Naive thymus-derived CD8-positive, alpha-beta T cell (primary cell): ENCODE measurements at regions of chr17 and their contacts with region 1.

Region 1: GRCh38 chr17:68291844-68292695 is 775 bp downstream of the ARSG start:
- DNase-seq: peak; percentile 85 to 98 (median 96)
- ATAC-seq: peak; percentile 69 to 71
- H3K4me3 Mint-ChIP-seq: peak overlapping the region; percentile 77 to 94 (median 84)
- H3K27ac Mint-ChIP-seq: peak overlapping the region; percentile 81 to 95 (median 91)
- H3K4me1 Mint-ChIP-seq: peaks cover 38 to 72% (median 70%) of the 10 kb centered on the region in 4 donors
- H3K27me3 Mint-ChIP-seq: no peaks in the 10 kb centered on the region

Region 2: DNA sequence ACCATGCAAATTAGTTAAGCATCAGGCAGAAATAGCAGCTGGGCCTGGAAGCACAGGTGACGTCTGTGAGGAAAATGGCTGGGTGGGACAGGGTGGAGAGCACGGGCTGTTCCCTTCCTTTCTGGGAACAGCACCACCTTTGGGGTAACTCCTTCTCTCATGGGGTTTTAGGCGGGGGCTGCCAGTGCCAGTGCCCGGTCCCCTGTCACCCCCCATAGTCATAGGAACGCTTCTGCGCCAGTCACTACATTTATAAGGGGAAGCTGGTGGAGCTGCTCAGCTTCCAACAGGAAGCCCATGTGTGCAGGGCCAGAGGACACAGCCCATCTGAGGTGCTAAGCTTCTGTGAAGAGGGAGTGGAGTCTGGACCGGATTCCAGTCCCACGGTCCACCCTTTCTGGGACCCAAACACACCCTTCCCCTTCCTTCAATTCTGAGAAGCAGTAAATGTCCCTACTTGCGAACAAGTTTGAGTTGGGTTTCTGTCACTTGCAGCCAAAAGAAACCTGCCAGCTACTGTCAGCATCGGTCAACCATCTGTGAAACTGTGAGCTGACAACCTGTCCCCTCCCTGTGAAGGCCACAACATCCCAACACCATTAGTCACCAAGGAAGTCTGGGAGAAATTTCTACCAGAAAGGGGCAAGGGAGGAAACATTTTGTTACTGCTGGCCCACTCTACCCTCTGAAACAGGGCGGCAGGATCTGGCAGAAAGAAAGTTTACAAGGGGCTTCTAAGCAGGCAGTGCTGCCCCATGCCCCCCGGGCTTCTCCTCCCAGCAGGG is 130.2 kb before region 1 on chr17:
- POLR2A ChIA-PET with region 1: no interaction called
- DNase-seq: no peak
- ATAC-seq: no peak
- H3K4me3 Mint-ChIP-seq: no peak overlapping the region
- H3K27ac Mint-ChIP-seq: peak overlapping the region in 1 of 10 donors; percentile 34
- H3K4me1 Mint-ChIP-seq: peaks cover 2 to 7% (median 4%) of the 10 kb centered on the region in 4 donors
- H3K27me3 Mint-ChIP-seq: no peaks in the 10 kb centered on the region

Region 3: GRCh38 chr17:68184816-68185436 is 107.1 kb before region 1 on chr17:
- POLR2A ChIA-PET with region 1: interaction called, 21 read pairs
- DNase-seq: peak in 5 of 10 donors; percentile 41 to 63 (median 58)
- ATAC-seq: peak; percentile 76 to 79
- H3K4me3 Mint-ChIP-seq: peak overlapping the region; percentile 45 to 94 (median 64)
- H3K27ac Mint-ChIP-seq: peak overlapping the region; percentile 57 to 94 (median 86)
- H3K4me1 Mint-ChIP-seq: peaks cover 19 to 71% (median 52%) of the 10 kb centered on the region in 4 donors
- H3K27me3 Mint-ChIP-seq: no peaks in the 10 kb centered on the region

Region 4: DNA sequence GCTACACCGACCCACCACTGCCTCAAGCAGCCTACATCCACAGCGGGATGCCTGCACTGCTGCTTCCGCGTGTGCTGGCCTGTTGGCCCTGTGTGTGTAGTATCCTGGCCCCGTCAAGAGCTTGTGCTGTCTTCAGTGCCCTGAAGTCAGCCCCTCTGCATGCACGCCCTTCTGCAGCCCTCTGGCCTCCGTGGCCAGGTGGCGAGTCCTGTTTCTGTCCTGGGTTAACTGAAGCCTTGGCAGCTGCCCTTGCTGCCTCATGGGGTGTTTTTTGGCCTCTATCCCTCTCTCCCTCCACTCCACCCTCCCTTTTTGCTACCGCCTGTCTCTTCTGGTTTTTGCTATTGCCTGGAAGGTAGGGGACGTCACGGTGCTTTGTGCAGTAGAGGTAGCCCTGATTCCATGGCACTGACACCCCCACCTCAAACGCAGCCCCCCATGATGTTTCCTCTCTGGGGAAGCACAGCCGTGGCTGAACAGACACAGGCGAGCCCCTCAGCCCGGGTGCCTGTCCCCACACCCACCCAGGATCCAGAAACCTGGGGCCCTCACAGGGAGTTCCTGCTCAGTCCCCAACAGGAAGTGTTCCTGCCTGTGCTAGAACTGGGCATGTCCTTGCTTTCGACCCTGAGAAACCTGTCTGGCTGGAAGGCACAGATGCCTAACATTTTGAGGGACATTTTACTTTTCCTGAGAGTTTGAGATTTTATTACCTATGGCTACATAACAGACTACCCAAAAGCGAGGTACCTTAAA is 63.1 kb before region 1 on chr17:
- POLR2A ChIA-PET with region 1: no interaction called
- DNase-seq: no peak
- ATAC-seq: no peak
- H3K4me3 Mint-ChIP-seq: no peak overlapping the region
- H3K27ac Mint-ChIP-seq: peak overlapping the region in 6 of 10 donors; percentile 6 to 81 (median 62)
- H3K4me1 Mint-ChIP-seq: peaks cover 0 to 41% (median 9%) of the 10 kb centered on the region in 4 donors
- H3K27me3 Mint-ChIP-seq: no peaks in the 10 kb centered on the region

Region 5: DNA sequence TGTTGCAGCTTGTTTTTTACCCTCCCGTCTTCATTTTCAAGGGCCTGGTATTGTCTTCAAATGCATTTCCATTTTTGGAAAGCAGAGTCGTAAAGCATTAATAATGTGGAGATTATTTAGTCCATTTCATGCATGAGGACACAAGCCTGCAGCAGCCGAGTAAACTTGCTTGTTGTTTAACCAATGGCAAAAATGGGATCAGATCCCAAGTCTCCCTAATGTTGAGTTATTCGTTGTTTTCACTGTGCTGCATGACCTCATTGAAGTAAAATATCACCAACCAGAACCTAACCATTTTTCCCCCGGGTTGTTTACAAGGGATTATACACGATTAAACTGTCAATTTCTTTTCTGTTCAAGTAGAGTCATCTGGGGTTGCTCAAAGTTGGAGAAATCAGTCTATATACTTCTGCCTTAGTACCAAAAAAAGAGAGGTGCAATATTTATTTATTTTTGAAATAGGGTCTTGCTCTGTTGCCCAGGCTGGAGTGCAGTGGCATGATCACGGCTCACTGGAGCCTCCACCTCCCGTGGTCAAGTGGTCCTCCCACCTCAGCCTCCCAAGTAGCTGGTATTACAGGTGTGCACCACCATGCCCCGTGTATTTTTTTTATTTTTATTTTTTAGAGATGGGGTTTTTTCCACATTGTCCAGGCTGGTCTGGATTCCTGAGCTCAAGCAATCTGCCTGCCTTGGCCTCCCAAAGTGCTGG is 31.9 kb before region 1 on chr17:
- POLR2A ChIA-PET with region 1: interaction called, 54 read pairs
- DNase-seq: no peak
- ATAC-seq: no peak
- H3K4me3 Mint-ChIP-seq: peak overlapping the region in 3 of 10 donors; percentile 34 to 75 (median 75)
- H3K27ac Mint-ChIP-seq: peak overlapping the region in 9 of 10 donors; percentile 22 to 98 (median 88)
- H3K4me1 Mint-ChIP-seq: peaks cover 25 to 73% (median 59%) of the 10 kb centered on the region in 4 donors
- H3K27me3 Mint-ChIP-seq: no peaks in the 10 kb centered on the region

Region 6: GRCh38 chr17:68318103-68318991 is 26.3 kb after region 1 on chr17:
- POLR2A ChIA-PET with region 1: interaction called, 15 read pairs
- DNase-seq: no peak
- ATAC-seq: no peak
- H3K4me3 Mint-ChIP-seq: no peak overlapping the region
- H3K27ac Mint-ChIP-seq: peak overlapping the region in 2 of 10 donors; percentile 17 to 29
- H3K4me1 Mint-ChIP-seq: peaks cover 27 to 71% (median 41%) of the 10 kb centered on the region in 4 donors
- H3K27me3 Mint-ChIP-seq: no peaks in the 10 kb centered on the region

Region 7: DNA sequence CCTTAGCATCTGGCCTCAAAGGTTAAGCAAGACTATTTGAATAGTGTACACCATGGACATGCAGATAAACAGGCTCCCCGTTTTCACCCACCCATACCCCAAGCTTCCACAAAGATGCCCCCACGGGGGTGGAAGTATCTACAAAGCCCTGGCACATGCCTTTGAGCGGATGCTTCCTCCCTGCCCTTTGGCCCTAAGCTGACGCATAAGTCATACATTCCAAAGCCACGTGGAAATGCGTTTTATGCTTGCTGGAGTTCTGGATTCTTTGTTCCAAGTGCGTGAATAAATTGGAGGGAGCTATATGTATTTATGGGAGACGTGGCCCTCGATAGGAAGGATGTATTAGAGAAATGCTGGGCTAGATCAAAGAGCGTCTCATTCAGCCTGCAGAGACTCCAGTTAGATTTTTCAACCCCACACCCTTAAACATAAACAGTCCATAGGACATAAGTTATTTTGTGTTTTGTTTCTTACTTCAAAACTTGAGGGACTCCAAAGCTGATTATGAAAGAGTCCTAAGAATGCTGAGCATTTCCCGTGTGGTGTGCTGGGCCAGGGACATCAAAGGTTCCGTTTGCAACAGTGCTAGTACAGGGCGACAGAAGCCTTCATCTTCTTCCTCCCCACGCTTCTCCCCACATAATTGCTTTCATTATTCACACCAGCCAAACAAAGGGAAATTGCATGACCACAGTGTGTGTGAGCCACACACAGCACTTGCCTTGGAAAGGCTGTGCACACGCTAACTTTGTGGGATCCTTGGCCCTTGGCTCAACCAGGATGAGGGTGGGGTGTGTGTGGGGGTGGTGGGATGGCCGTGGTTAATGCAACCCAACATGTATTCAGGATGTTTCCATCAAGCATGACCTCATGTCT is 91.6 kb after region 1 on chr17:
- POLR2A ChIA-PET with region 1: interaction called, 16 read pairs
- DNase-seq: peak in 5 of 10 donors; percentile 3 to 34 (median 17)
- ATAC-seq: peak; percentile 82 to 92
- H3K4me3 Mint-ChIP-seq: peak overlapping the region; percentile 7 to 69 (median 58)
- H3K27ac Mint-ChIP-seq: peak overlapping the region in 7 of 10 donors; percentile 1 to 73 (median 49)
- H3K4me1 Mint-ChIP-seq: peaks cover 15 to 31% (median 24%) of the 10 kb centered on the region in 4 donors
- H3K27me3 Mint-ChIP-seq: no peaks in the 10 kb centered on the region

Region 8: DNA sequence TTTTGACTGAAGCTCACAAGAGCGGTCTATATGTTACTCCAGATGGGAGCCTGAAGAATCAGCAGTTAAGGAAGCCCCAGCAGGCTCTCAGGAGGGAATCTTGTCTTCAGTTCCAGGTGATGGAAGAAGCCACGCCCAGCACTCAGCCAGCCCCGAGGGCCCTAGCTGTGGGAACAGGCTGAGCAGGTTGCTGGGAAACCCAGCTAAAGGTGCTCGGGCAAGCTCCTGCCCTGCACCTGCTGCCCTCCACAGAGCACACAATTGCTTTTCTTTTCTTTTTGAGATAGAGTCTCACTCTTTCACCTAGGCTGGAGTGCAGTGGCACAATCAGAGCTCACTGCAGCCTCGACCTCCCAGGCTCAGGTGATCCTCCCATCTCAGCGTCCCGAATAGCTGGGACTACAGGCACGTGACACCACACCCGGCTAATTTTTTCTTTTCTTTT is 132.9 kb after region 1 on chr17:
- POLR2A ChIA-PET with region 1: interaction called, 10 read pairs
- DNase-seq: no peak
- ATAC-seq: no peak
- H3K4me3 Mint-ChIP-seq: no peak overlapping the region
- H3K27ac Mint-ChIP-seq: no peak overlapping the region
- H3K4me1 Mint-ChIP-seq: peaks cover 0 to 12% (median 4%) of the 10 kb centered on the region in 4 donors
- H3K27me3 Mint-ChIP-seq: no peaks in the 10 kb centered on the region